H1 (cell line): ENCODE measurements at regions of chr3 and their contacts with region 1.

Region 1: DNA sequence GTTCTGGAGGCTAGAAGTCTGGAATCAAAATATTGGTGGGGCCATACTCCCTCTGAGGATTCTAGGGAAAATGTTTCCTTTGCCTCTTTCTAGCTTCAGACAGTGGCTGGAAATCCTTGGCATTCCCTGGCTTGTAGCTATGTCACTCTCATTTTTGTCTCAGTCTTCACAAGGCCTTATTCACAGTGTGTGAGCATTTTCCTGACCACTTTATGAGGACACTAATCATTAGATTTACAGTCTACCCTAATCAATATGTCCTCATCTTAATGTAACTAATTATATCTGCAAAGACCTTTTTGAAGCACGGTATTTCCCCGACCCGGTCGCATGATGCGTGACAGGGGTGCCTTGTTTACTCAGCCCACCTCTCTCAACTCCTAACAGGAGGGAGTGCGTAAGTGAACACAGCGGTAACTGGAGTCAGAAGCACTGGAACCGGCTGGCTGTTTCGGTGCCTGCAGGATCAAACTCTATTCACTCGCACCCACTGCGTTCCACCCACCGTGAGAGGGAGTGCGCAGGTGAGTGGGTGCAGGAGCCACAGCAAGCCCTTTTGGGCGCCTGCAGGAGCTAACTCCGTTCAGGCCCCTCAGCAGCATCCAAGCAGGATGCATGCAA is 155.0 kb downstream of the EPHA3 start:
- DNase-seq: no peak
- H3K4me3 ChIP-seq: no peak overlapping the region
- H3K27ac ChIP-seq: no peak overlapping the region
- H3K4me1 ChIP-seq: peaks cover 0 to 8% (median 2%) of the 10 kb centered on the region in 4 experiments; a peak in 4 of 7 replicates
- H3K27me3 ChIP-seq: no peaks in the 10 kb centered on the region
- CTCF ChIP-seq: no peak
- EP300 ChIP-seq: no peak
- POLR2A ChIP-seq: no peak
- RAD21 ChIP-seq: no peak

Region 2: DNA sequence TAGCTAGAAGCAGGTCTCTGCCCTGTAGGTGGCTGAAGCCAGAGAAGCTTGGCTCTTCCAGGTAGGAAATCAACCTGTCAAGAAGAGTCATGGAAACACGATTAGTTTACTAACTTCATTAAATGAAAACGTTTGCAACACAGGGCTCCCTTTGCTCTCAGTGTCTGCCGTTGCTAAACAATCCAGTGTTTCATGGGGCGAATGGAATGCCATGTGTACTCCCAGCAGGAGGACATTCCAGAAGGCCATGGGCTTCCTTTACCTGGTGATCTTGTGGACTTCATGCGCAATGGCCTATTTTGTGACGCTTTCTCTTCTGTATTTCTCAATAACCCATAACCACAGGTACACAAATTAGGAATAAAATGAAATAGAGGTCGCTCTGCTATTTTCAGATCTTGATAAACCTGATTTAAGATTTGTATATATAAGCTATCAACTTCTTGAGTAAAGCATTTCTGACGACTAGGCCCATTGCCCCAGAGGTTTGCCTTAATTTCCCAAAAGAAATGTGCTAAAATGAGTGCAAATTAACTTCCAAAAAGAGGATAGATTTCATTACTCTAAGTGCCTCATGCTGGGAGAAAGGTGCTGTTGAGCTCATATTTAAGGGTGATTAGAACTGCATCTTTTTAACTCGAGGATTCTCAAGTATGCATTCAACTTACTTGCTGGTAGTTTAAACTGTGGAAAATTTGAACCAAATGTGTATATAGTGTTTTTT is 16.0 kb after region 1 on chr3:
- CTCF ChIA-PET with region 1: interaction called, 10 read pairs
- POLR2A ChIA-PET with region 1: interaction called, 3 read pairs
- DNase-seq: peak; percentile 55 to 56
- H3K4me3 ChIP-seq: no peak overlapping the region
- H3K27ac ChIP-seq: no peak overlapping the region; the same call in 1 of the 2 replicates
- H3K4me1 ChIP-seq: peaks cover 0 to 6% (median 3%) of the 10 kb centered on the region in 4 experiments; a peak in 4 of 7 replicates
- H3K27me3 ChIP-seq: no peaks in the 10 kb centered on the region
- CTCF ChIP-seq: no peak
- EP300 ChIP-seq: peak in 1 of 2 experiments; percentile 85; a peak in 1 of 3 replicates
- POLR2A ChIP-seq: no peak
- RAD21 ChIP-seq: peak in 1 of 2 experiments; percentile 9; a peak in 1 of 4 replicates